Dendritic cell treated with granulocyte-macrophage colony-stimulating factor and Interleukin-4, amounts not matched to agents 40 ng/mL and 50 ng/mL, for 4 days (primary cell): ENCODE measurements at regions of chr7 and their contacts with region 1.

Region 1: GRCh38 chr7:74083117-74083876 is at the start of gene LIMK1:
- H3K4me3 Mint-ChIP-seq: peak within 1 kb of the TSS; percentile 91
- H3K27ac Mint-ChIP-seq: peak within 1 kb of the TSS; percentile 83
- H3K4me1 Mint-ChIP-seq: peaks cover 31% of the 10 kb centered on the region
- H3K27me3 Mint-ChIP-seq: no peaks in the 10 kb centered on the region

Region 2: GRCh38 chr7:73738612-73739374 is 344.5 kb before region 1 on chr7 and contains the start of gene ABHD11:
- intact Hi-C with region 1: loop called (anchors 5 kb)
- H3K4me3 Mint-ChIP-seq: peak within 1 kb of the TSS; percentile 97
- H3K27ac Mint-ChIP-seq: peak within 1 kb of the TSS; percentile 96
- H3K4me1 Mint-ChIP-seq: peaks cover 39% of the 10 kb centered on the region
- H3K27me3 Mint-ChIP-seq: peaks cover 34% of the 10 kb centered on the region

Region 3: DNA sequence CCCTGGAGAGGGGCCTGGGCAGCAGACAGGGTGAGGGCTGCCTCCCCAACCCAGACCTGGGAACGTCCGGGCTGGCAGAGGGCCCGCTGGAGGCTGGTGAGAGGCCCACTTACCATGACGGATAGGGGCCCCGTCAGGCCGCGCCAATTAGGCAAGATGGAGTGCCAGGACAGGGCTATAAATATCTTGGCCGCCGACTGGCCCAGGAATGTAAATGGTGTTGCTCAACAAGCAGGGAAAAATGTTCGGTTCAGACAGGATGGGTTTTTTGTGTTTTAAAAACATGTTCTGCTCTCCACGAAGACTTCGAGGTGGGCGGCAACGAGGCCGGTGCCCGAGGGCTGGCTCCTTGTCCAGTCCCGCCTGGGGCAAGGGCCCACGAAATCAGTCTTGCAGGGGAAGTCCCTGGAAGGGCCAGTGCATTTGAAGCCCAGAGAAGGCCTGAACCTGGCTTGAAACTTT is 91.2 kb before region 1 on chr7:
- intact Hi-C with region 1: no loop called
- H3K4me3 Mint-ChIP-seq: no peak overlapping the region
- H3K27ac Mint-ChIP-seq: no peak overlapping the region
- H3K4me1 Mint-ChIP-seq: peaks cover 3% of the 10 kb centered on the region
- H3K27me3 Mint-ChIP-seq: peaks cover 17% of the 10 kb centered on the region

Region 4: DNA sequence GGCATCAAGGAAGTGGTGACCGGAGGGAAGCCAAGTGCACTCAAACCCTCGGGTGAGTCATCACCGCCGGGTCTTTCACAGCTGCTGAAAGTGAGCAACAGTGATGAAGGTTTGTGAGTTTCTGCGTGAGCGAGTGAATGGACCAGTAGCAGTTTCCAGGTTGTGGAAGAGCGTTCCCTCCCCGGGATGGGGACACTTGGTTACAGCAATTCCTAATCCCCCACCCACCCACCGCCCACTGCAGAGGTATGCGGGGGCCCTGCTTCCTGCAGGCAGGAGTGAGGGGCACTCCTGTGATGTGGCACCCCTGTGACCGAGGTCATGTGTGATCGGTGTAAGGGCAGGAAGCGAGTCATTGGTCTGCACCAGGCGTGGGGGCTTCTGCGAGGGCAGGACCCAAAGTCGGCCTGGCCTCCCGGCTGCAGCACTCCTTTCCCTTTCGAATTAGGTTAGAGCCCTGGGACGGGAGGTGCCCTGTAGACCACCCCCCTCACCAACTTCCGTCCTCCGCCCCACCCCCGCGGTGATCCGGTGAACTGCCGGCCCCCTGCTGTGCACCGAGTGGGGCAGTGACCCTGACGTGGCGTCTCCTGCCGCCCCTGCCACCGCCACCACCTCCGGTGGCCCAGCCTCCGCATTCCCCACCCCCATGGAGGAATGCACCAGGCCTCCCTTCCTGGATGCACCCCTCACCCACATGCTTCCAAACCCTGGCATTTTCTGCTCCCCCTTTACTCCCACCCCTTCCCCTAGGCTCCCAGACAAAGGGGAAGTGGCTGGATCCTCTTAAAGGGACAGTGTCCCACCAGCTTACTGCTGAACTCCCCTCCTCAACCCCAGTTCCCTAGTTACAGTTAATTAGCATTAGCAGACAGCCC is 11.2 kb after region 1 on chr7:
- intact Hi-C with region 1: loop called (anchors 1 kb)
- H3K4me3 Mint-ChIP-seq: peak overlapping the region; percentile 93
- H3K27ac Mint-ChIP-seq: peak overlapping the region; percentile 88
- H3K4me1 Mint-ChIP-seq: peaks cover 58% of the 10 kb centered on the region
- H3K27me3 Mint-ChIP-seq: no peaks in the 10 kb centered on the region